ENCODE measurements at regions of chr7 and their contacts with region 1.

Region 1: DNA sequence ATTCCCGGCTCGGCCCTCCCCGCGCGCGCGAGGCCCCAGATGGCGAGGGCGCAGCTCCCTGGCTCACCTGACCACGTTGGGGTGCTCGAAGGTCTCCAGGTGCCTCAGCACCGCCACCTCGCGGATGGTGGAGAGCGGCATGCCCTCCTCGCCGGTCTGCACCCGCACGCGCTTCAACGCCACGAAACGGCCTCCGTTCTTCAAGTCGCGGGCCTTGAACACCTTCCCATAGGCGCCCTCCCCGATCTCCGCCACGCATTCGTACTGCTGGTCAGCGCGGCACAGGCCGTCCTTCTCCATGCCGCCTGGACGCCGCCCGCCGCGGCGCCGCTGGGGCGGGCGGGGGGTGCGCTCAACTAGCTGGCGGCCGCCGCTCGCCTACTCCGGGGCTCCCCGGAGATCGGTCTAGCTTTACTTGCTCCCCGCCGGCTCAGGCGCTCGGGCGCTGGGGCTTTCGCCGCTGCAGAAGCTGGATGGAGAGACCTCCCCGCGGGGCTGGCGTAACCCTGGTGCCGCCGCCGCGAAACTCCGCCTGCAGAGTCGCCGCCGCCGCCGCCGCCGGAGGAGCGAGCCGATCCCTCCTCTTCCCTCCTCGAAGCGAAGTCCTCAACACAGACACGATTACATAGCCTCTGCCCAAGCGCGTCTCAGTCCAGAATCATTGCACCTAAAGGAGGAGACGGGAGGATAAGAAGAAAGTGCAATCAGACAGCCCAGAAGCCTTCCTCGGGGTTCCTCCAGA is 3.2 kb downstream of the CDK6 start:
- DNase-seq: no peak
- ATAC-seq: peak; percentile 72
- H3K4me3 ChIP-seq: peak overlapping the region; percentile 85
- H3K27ac ChIP-seq: peak overlapping the region; percentile 91
- H3K4me1 ChIP-seq: peaks cover 5% of the 10 kb centered on the region
- H3K27me3 ChIP-seq: no peaks in the 10 kb centered on the region
- CTCF ChIP-seq: peak; percentile 87 to 98 (median 94)
- EP300 ChIP-seq: peak in 1 of 2 experiments; percentile 21; a peak in 1 of 4 replicates
- POLR2A ChIP-seq: peak; percentile 77
- RAD21 ChIP-seq: peak; percentile 88

Region 2: GRCh38 chr7:92633211-92633906 is 199.8 kb before region 1 on chr7:
- CTCF ChIA-PET with region 1: interaction called, 5 read pairs
- POLR2A ChIA-PET with region 1: interaction called, 3 read pairs
- RAD21 ChIA-PET with region 1: interaction called, 16 read pairs
- SMC1A ChIA-PET with region 1: interaction called, 5 read pairs
- in situ Hi-C with region 1: no loop called
- intact Hi-C with region 1: no loop called
- DNase-seq: no peak
- ATAC-seq: peak; percentile 16
- H3K4me3 ChIP-seq: no peak overlapping the region
- H3K27ac ChIP-seq: peak overlapping the region; percentile 61
- H3K4me1 ChIP-seq: peaks cover 48% of the 10 kb centered on the region
- H3K27me3 ChIP-seq: no peaks in the 10 kb centered on the region
- CTCF ChIP-seq: no peak
- EP300 ChIP-seq: peak in 1 of 2 experiments; percentile 60; a peak in 2 of 4 replicates
- POLR2A ChIP-seq: no peak
- RAD21 ChIP-seq: no peak

Region 3: GRCh38 chr7:92698237-92698841 is 134.9 kb before region 1 on chr7:
- CTCF ChIA-PET with region 1: interaction called, 6 read pairs
- POLR2A ChIA-PET with region 1: interaction called, 3 read pairs
- RAD21 ChIA-PET with region 1: interaction called, 23 read pairs
- SMC1A ChIA-PET with region 1: interaction called, 20 read pairs
- in situ Hi-C with region 1: loop called (anchors 5 kb)
- intact Hi-C with region 1: no loop called
- DNase-seq: no peak
- ATAC-seq: no peak
- H3K4me3 ChIP-seq: no peak overlapping the region
- H3K27ac ChIP-seq: no peak overlapping the region
- H3K4me1 ChIP-seq: no peaks in the 10 kb centered on the region
- H3K27me3 ChIP-seq: no peaks in the 10 kb centered on the region
- CTCF ChIP-seq: no peak
- EP300 ChIP-seq: no peak
- POLR2A ChIP-seq: no peak
- RAD21 ChIP-seq: no peak

Region 4: DNA sequence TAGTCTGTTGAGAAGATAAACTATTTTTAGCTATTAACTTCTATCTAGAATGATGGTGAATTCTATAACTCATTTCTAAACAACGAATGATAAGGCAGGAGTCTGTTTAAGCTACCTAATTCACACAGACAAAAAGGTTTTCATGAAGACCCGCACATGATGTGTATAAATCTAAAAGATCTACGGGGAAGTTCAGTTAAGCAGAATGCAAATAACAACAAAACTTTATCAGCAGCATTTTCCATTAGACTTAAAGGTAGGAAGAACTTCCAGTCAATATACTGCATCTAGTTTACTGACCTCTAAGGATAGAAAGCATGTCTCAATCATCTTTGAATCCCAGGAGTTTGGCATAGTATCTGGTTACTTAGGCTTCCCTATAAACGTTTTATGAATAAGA is 59.4 kb before region 1 on chr7:
- CTCF ChIA-PET with region 1: interaction called, 4 read pairs
- POLR2A ChIA-PET with region 1: no interaction called
- RAD21 ChIA-PET with region 1: interaction called, 3 read pairs
- SMC1A ChIA-PET with region 1: interaction called, 12 read pairs
- in situ Hi-C with region 1: no loop called
- intact Hi-C with region 1: no loop called
- DNase-seq: no peak
- ATAC-seq: no peak
- H3K4me3 ChIP-seq: no peak overlapping the region
- H3K27ac ChIP-seq: no peak overlapping the region
- H3K4me1 ChIP-seq: peaks cover 13% of the 10 kb centered on the region
- H3K27me3 ChIP-seq: no peaks in the 10 kb centered on the region
- CTCF ChIP-seq: no peak
- EP300 ChIP-seq: no peak
- POLR2A ChIP-seq: no peak
- RAD21 ChIP-seq: no peak

Region 5: DNA sequence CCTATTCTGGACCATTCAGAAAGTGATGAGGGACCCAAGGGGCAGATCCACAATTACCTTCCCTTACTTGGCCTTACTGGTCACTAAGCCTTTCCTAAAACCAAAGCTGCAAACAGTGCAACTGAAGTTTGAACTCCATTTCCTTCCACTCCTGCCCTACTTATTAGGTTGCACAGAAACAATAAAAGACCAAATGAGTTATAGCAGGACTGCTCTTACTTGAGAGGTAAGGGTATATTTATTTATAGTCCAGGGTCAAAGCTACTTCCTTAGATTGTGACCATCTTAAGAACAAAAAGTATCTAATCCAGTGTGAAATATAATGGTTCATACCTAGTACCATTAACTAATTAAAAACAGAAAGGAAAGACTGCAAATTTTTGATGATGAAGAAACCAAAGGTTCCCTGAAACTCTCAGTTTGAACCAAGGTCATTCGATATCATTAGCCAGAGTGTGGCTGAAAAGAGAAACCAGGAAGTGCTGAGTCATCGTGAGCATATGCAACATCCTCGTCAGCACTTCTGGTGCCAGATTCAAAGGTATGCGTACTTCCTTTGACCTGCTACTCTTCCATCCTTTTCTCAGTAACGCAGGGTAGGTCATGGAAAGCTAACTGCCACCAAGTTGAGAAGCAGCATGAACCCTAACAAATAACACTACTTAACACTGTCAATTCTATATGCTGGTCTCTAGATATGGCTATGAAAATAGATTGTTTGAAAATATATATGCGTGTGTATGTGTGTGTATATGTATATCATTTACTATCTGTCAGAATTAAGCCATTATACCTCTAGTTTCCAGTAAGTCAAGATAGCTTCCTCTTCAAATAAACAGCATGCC is 23.6 kb before region 1 on chr7:
- CTCF ChIA-PET with region 1: interaction called, 9 read pairs
- POLR2A ChIA-PET with region 1: interaction called, 11 read pairs
- RAD21 ChIA-PET with region 1: interaction called, 124 read pairs
- SMC1A ChIA-PET with region 1: interaction called, 83 read pairs
- in situ Hi-C with region 1: no loop called
- intact Hi-C with region 1: loop called (anchors 1 kb)
- DNase-seq: peak; percentile 92
- ATAC-seq: peak; percentile 76
- H3K4me3 ChIP-seq: peak overlapping the region; percentile 37; the same call in 1 of the 2 replicates
- H3K27ac ChIP-seq: peak overlapping the region; percentile 87
- H3K4me1 ChIP-seq: peaks cover 45% of the 10 kb centered on the region
- H3K27me3 ChIP-seq: no peaks in the 10 kb centered on the region
- CTCF ChIP-seq: no peak
- EP300 ChIP-seq: peak; percentile 89 to 96; a peak in 3 of 4 replicates
- POLR2A ChIP-seq: peak; percentile 54; the same call in 1 of the 2 replicates
- RAD21 ChIP-seq: no peak

Region 6: DNA sequence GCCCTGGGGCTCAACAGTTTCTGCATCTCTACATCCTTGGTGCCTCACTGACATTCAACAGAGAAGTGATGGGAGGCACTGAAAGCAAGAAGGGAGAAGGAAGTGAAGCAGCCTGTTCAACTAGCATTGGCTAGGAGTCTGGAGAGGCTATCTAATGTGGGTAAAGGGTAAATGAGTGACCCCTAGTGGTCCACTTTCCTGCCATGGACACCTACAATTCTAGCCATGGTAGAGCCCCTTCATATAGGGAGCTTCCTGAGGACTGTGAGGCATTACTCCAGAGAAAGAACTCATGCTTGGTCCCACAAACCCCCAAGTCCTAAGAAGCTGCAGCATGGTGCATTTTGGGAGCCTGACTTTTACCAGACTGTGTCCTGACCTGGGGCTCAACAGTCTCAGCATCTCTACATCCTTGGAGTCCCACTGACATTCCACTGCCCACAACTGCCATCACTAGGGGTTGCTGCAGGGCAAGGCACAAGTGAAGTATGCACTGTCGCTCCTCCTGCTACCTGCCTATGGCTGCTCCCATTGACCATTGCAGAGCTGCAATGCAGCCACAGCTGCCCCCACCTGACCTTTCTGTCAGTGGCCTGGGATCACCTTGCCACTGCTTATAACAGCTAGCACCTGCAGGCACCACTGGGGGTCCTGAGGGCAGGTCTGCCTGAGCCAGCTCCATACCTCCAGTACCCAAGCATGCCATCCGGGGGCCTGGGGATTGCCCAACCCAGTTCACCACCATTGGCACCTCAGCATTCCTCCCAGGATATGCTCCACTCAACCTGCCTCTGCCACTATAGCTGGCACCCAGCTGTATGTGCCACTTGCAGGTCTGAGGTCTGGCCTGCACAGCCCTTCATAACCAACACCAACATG is 47.3 kb after region 1 on chr7:
- CTCF ChIA-PET with region 1: no interaction called
- POLR2A ChIA-PET with region 1: no interaction called
- RAD21 ChIA-PET with region 1: no interaction called
- SMC1A ChIA-PET with region 1: interaction called, 3 read pairs
- in situ Hi-C with region 1: no loop called
- intact Hi-C with region 1: loop called (anchors 1 kb)
- DNase-seq: no peak
- ATAC-seq: peak; percentile 83
- H3K4me3 ChIP-seq: no peak overlapping the region
- H3K27ac ChIP-seq: no peak overlapping the region
- H3K4me1 ChIP-seq: no peaks in the 10 kb centered on the region
- H3K27me3 ChIP-seq: no peaks in the 10 kb centered on the region
- CTCF ChIP-seq: peak in 2 of 3 experiments; percentile 20 to 31; a peak in 3 of 6 replicates
- EP300 ChIP-seq: no peak
- POLR2A ChIP-seq: no peak
- RAD21 ChIP-seq: peak; percentile 56

Region 7: GRCh38 chr7:93055543-93056107 is 222.4 kb after region 1 on chr7:
- CTCF ChIA-PET with region 1: interaction called, 4 read pairs
- POLR2A ChIA-PET with region 1: no interaction called
- RAD21 ChIA-PET with region 1: no interaction called
- SMC1A ChIA-PET with region 1: interaction called, 3 read pairs
- in situ Hi-C with region 1: loop called (anchors 10 kb)
- intact Hi-C with region 1: loop called (anchors 1 kb)
- DNase-seq: no peak
- ATAC-seq: peak; percentile 83
- H3K4me3 ChIP-seq: no peak overlapping the region
- H3K27ac ChIP-seq: no peak overlapping the region
- H3K4me1 ChIP-seq: no peaks in the 10 kb centered on the region
- H3K27me3 ChIP-seq: no peaks in the 10 kb centered on the region
- CTCF ChIP-seq: peak; percentile 39 to 73 (median 57); a peak in 5 of 6 replicates
- EP300 ChIP-seq: no peak
- POLR2A ChIP-seq: no peak
- RAD21 ChIP-seq: peak; percentile 86

Measured in GM12878 (cell line).